PC-3 (cell line): ENCODE measurements at regions of chr2 and their contacts with region 1.

Region 1: GRCh38 chr2:215002500-215002899 is 135.9 kb downstream of the ABCA12 start:
- DNase-seq: peak; percentile 59
- ATAC-seq: peak; percentile 76
- H3K4me3 ChIP-seq: no peak overlapping the region
- H3K27ac ChIP-seq: no peak overlapping the region
- H3K4me1 ChIP-seq: peaks cover 5% of the 10 kb centered on the region; the same call in 1 of the 2 replicates
- H3K27me3 ChIP-seq: no peaks in the 10 kb centered on the region
- CTCF ChIP-seq: peak; percentile 85

Region 2: GRCh38 chr2:214902286-214902685 is 100.2 kb before region 1 on chr2:
- CTCF ChIA-PET with region 1: no interaction called
- POLR2A ChIA-PET with region 1: interaction called, 10 read pairs
- intact Hi-C with region 1: no loop called
- DNase-seq: no peak
- ATAC-seq: no peak
- H3K4me3 ChIP-seq: no peak overlapping the region
- H3K27ac ChIP-seq: no peak overlapping the region
- H3K4me1 ChIP-seq: no peaks in the 10 kb centered on the region
- H3K27me3 ChIP-seq: no peaks in the 10 kb centered on the region
- CTCF ChIP-seq: no peak

Region 3: GRCh38 chr2:214934006-214934405 is 68.5 kb before region 1 on chr2:
- CTCF ChIA-PET with region 1: no interaction called
- POLR2A ChIA-PET with region 1: interaction called, 21 read pairs
- intact Hi-C with region 1: no loop called
- DNase-seq: no peak
- ATAC-seq: no peak
- H3K4me3 ChIP-seq: no peak overlapping the region
- H3K27ac ChIP-seq: no peak overlapping the region
- H3K4me1 ChIP-seq: no peaks in the 10 kb centered on the region
- H3K27me3 ChIP-seq: no peaks in the 10 kb centered on the region
- CTCF ChIP-seq: no peak